Activated T-helper 1 cell treated with anti-CD3 and anti-CD28 coated beads, Interleukin-12 subunit alpha, Interleukin-12 subunit beta, Interleukin-2, Interleukin-4 antibody, amounts not matched to agents 30 ng/mL and 10 ng/mL and 1 ng/mL, durations not matched to agents 14 hours and 24 hours and 36 hours (primary cell): ENCODE measurements at regions of chr5 and their contacts with region 1.

Region 1: GRCh38 chr5:149551200-149552037 is at the start of gene CSNK1A1:
- DNase-seq: peak; percentile 99
- H3K4me3 Mint-ChIP-seq: peak within 1 kb of the TSS; percentile 99
- H3K27ac Mint-ChIP-seq: peak within 1 kb of the TSS; percentile 99
- H3K4me1 Mint-ChIP-seq: peaks cover 28% of the 10 kb centered on the region
- H3K27me3 Mint-ChIP-seq: no peaks in the 10 kb centered on the region
- total RNA-seq, gene CSNK1A1: 195 and 205 TPM in 2 replicates

Region 2: DNA sequence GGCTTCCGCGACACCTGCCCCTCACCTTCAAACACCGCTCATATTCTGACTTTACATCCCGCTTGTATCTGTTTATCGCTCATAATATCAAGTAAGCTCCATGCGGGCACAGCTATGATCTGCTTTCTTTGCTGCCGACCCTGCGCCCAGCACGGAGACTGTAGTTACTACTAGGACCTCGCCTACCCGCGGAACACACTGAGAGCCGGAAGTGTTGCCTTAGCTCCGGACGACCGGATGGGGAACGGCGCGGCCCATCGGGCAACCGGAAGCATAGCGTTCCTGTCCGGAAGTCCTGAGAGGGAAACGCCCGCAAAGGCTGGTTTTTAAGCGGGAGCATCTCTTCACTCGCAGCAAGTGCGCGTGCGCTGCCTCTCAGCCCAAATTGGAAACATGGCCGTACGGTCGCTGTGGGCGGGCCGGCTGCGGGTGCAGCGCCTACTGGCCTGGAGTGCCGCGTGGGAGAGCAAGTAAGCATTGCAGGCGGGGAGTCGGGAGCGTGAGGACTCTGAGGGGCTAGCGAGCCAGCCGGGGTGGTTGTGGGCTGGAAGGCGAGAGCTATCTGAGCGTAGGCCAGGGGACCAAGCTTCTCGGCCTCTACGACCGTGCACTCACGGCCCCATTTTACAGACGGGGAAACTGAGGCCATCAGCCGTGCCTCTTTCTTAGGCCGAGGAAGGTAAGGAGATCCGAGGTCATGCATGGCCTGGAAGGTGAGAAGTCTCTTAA is 206.1 kb before region 1 on chr5 and contains the start of gene GRPEL2:
- intact Hi-C with region 1: loop called (anchors 1 kb)
- DNase-seq: peak; percentile 89
- H3K4me3 Mint-ChIP-seq: peak within 1 kb of the TSS; percentile 95
- H3K27ac Mint-ChIP-seq: peak within 1 kb of the TSS; percentile 94
- H3K4me1 Mint-ChIP-seq: peaks cover 43% of the 10 kb centered on the region
- H3K27me3 Mint-ChIP-seq: no peaks in the 10 kb centered on the region
- total RNA-seq, gene GRPEL2: 30.4 and 30.6 TPM in 2 replicates

Region 3: GRCh38 chr5:149367249-149367971 is 184.0 kb before region 1 on chr5:
- intact Hi-C with region 1: no loop called
- DNase-seq: peak; percentile 37
- H3K4me3 Mint-ChIP-seq: no peak overlapping the region
- H3K27ac Mint-ChIP-seq: no peak overlapping the region
- H3K4me1 Mint-ChIP-seq: peaks cover 17% of the 10 kb centered on the region
- H3K27me3 Mint-ChIP-seq: peaks cover 2% of the 10 kb centered on the region

Region 4: GRCh38 chr5:149497357-149497756 is 54.1 kb before region 1 on chr5:
- intact Hi-C with region 1: loop called (anchors 5 kb)
- DNase-seq: no peak
- H3K4me3 Mint-ChIP-seq: no peak overlapping the region
- H3K27ac Mint-ChIP-seq: no peak overlapping the region
- H3K4me1 Mint-ChIP-seq: no peaks in the 10 kb centered on the region
- H3K27me3 Mint-ChIP-seq: no peaks in the 10 kb centered on the region

Region 5: DNA sequence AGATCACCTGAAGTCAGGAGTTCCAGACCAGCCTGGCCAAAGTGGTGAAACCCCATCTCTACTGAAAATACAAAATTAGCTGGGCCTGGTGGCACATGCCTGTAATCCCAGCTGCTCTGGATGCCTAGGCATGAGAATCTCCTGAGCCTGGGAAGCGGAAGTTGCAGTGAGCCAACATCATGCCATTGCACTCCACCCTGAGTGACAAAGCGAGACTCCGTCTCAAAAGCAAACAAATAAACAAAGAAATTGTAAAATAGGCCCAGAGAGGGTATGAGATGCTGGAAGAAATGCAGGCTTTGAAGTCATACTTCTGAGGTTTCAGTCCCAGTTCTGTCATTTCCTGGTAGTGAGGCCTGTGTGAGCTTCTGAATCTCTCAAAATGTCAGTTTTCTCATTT is 24.6 kb after region 1 on chr5:
- intact Hi-C with region 1: loop called (anchors 1 kb)
- DNase-seq: peak; percentile 8
- H3K4me3 Mint-ChIP-seq: no peak overlapping the region
- H3K27ac Mint-ChIP-seq: peak overlapping the region; percentile 81
- H3K4me1 Mint-ChIP-seq: peaks cover 35% of the 10 kb centered on the region
- H3K27me3 Mint-ChIP-seq: peaks cover 4% of the 10 kb centered on the region

Region 6: GRCh38 chr5:149759986-149760853 is 208.8 kb after region 1 on chr5:
- intact Hi-C with region 1: no loop called
- DNase-seq: no peak
- H3K4me3 Mint-ChIP-seq: no peak overlapping the region
- H3K27ac Mint-ChIP-seq: no peak overlapping the region
- H3K4me1 Mint-ChIP-seq: no peaks in the 10 kb centered on the region
- H3K27me3 Mint-ChIP-seq: no peaks in the 10 kb centered on the region

Region 7: DNA sequence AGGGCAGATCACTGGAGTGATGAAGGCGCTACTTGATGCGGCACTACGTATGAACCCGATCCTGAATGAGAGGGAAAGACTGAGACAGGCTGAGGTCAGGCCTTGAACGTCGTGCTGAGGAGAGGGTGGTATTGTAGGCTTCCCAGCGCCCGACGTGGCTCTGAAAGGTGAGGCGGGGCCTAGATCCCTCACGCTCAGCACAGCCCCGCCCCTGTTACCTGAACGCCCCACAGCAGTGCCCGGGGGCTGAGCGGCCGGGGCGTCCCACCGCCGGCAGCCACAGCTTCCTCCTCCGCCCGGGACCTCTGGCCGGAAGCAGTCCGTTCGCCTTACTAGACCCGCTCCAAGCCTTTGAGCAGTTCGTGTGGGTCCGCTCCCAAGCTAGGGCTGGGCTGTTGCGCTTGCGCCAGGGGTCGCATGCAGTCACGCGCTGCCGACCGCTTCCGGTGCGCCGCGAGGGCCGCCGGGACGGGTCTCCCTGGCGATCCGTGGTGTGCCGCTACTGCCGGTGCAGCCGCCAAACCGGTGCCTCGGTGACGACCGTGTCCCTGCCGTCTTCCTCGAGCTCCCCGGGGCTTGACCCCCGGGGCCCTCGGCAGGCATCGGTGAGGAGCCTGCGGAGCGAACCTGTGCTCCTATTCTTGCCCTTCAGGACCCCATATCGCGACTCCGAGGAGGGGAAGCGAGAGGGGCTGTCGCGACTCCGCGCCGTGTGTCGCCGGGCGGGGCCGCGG is 449.0 kb after region 1 on chr5 and contains the starts of genes HMGXB3 and TIGD6:
- intact Hi-C with region 1: loop called (anchors 1 kb)
- DNase-seq: peak; percentile 82
- H3K4me3 Mint-ChIP-seq: peak within 1 kb of the TSS; percentile 99
- H3K27ac Mint-ChIP-seq: peak within 1 kb of the TSS; percentile 98
- H3K4me1 Mint-ChIP-seq: peaks cover 52% of the 10 kb centered on the region
- H3K27me3 Mint-ChIP-seq: no peaks in the 10 kb centered on the region
- total RNA-seq, gene HMGXB3: 49.1 and 49.9 TPM in 2 replicates
- total RNA-seq, gene TIGD6: 2.4 TPM in 2 replicates